ENCODE measurements at regions of chr7 and their contacts with region 1.

Region 1: GRCh38 chr7:41940760-41941343 is 238.0 kb upstream of the INHBA start:
- DNase-seq: peak; percentile 59 to 71
- ATAC-seq: peak; percentile 79 to 90
- H3K4me3 ChIP-seq: no peak overlapping the region
- H3K27ac ChIP-seq: no peak overlapping the region
- H3K4me1 ChIP-seq: 0 out of 3 replicates have a peak, but pooled peaks cover 5% of the 10 kb centered on the region
- CTCF ChIP-seq: peak; percentile 77
- EP300 ChIP-seq: no peak
- POLR2A ChIP-seq: no peak
- RAD21 ChIP-seq: peak; percentile 70 to 74

Region 2: GRCh38 chr7:41930538-41931262 is 10.2 kb before region 1 on chr7:
- CTCF ChIA-PET with region 1: interaction called, 17 read pairs
- POLR2A ChIA-PET with region 1: no interaction called
- DNase-seq: no peak
- ATAC-seq: no peak
- H3K4me3 ChIP-seq: no peak overlapping the region
- H3K27ac ChIP-seq: no peak overlapping the region
- H3K4me1 ChIP-seq: no peaks in the 10 kb centered on the region
- CTCF ChIP-seq: no peak
- EP300 ChIP-seq: no peak
- POLR2A ChIP-seq: no peak
- RAD21 ChIP-seq: no peak

Region 3: GRCh38 chr7:41977151-41977651 is 36.3 kb after region 1 on chr7:
- CTCF ChIA-PET with region 1: interaction called, 88 read pairs
- POLR2A ChIA-PET with region 1: no interaction called
- DNase-seq: peak; percentile 28 to 53
- ATAC-seq: peak; percentile 65 to 80; a peak in 3 of 6 replicates
- H3K4me3 ChIP-seq: no peak overlapping the region
- H3K27ac ChIP-seq: no peak overlapping the region
- H3K4me1 ChIP-seq: no peaks in the 10 kb centered on the region
- CTCF ChIP-seq: peak; percentile 65
- EP300 ChIP-seq: no peak
- POLR2A ChIP-seq: no peak
- RAD21 ChIP-seq: peak; percentile 64; a peak in 4 of 5 replicates

Region 4: GRCh38 chr7:42138691-42139090 is 197.8 kb after region 1 on chr7:
- CTCF ChIA-PET with region 1: no interaction called
- POLR2A ChIA-PET with region 1: no interaction called
- DNase-seq: no peak
- ATAC-seq: no peak; a peak in 1 of 6 replicates
- H3K4me3 ChIP-seq: no peak overlapping the region
- H3K27ac ChIP-seq: no peak overlapping the region
- H3K4me1 ChIP-seq: no peaks in the 10 kb centered on the region
- CTCF ChIP-seq: no peak
- EP300 ChIP-seq: no peak
- POLR2A ChIP-seq: no peak
- RAD21 ChIP-seq: no peak

Region 5: GRCh38 chr7:42238709-42239391 is 298.0 kb after region 1 on chr7:
- CTCF ChIA-PET with region 1: no interaction called
- POLR2A ChIA-PET with region 1: no interaction called
- DNase-seq: no peak
- ATAC-seq: no peak
- H3K4me3 ChIP-seq: no peak overlapping the region
- H3K27ac ChIP-seq: no peak overlapping the region
- H3K4me1 ChIP-seq: no peaks in the 10 kb centered on the region
- CTCF ChIP-seq: no peak
- EP300 ChIP-seq: no peak
- POLR2A ChIP-seq: no peak
- RAD21 ChIP-seq: no peak

Region 6: DNA sequence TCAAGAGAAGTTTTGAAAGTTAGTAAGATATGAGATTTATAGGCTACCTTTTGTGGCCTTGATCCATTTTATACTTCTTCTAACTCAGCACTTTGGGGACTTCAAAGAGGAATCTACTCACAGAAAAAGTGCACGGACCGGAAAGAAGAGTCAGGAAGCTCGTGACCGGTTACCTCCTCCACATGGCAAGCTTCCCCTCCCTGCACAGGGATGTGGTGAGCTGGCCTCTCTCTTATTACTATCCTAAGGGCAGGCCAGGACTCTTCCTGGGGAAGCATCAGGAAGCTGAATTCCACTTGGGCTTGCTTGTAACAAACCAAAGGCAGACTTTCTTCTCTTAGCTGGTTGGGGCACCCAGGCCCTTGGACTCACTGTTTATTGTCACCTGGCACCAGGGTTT is 467.0 kb after region 1 on chr7:
- CTCF ChIA-PET with region 1: no interaction called
- POLR2A ChIA-PET with region 1: no interaction called
- DNase-seq: no peak
- ATAC-seq: no peak
- H3K4me3 ChIP-seq: no peak overlapping the region
- H3K27ac ChIP-seq: no peak overlapping the region
- H3K4me1 ChIP-seq: no peaks in the 10 kb centered on the region
- CTCF ChIP-seq: no peak
- EP300 ChIP-seq: no peak
- POLR2A ChIP-seq: no peak
- RAD21 ChIP-seq: no peak

Region 7: GRCh38 chr7:42527004-42527403 is 586.2 kb after region 1 on chr7:
- CTCF ChIA-PET with region 1: no interaction called
- POLR2A ChIA-PET with region 1: no interaction called
- DNase-seq: no peak
- ATAC-seq: no peak
- H3K4me3 ChIP-seq: no peak overlapping the region
- H3K27ac ChIP-seq: no peak overlapping the region
- H3K4me1 ChIP-seq: no peaks in the 10 kb centered on the region
- CTCF ChIP-seq: no peak
- EP300 ChIP-seq: no peak
- POLR2A ChIP-seq: no peak
- RAD21 ChIP-seq: no peak

Region 8: DNA sequence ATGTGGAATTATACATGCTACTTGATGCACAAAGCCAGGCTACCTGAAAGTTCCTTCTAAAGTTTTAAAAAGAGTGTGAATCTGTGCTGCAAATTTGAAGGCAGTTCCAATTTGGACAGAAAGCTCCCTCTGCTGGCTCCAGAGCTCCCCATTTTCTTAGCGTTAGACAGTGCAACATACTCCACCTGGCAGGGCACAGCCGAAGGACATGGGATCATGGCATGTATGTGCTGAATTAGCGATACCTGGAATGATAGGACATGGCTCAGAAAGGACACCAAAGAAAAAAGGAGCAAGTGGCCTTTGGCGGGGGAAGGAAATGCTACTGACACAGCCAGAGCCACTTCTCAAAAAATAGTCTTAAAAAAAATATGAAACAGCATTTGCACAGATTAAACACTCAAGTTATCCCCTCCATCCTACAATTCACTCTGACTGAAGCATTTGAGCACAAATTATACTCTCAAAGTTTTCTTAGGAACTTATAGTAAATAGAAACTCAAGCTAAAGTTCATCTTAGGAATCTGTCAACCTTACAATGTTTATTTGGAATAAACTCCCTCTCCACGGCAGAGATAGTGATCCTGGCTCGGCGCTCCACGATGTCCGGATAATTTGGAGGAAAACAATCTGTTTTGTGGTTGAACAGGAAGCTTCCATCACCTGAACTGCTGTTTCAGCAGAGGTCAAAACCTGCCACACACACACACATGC is 891.0 kb after region 1 on chr7:
- CTCF ChIA-PET with region 1: interaction called, 11 read pairs
- POLR2A ChIA-PET with region 1: no interaction called
- DNase-seq: peak in 1 of 2 experiments; percentile 30
- ATAC-seq: peak; percentile 84 to 89; a peak in 5 of 6 replicates
- H3K4me3 ChIP-seq: no peak overlapping the region
- H3K27ac ChIP-seq: no peak overlapping the region
- H3K4me1 ChIP-seq: no peaks in the 10 kb centered on the region
- CTCF ChIP-seq: peak; percentile 47
- EP300 ChIP-seq: no peak
- POLR2A ChIP-seq: no peak
- RAD21 ChIP-seq: peak; percentile 53 to 56

Region 9: GRCh38 chr7:42876182-42877068 is 935.6 kb after region 1 on chr7:
- CTCF ChIA-PET with region 1: interaction called, 99 read pairs
- POLR2A ChIA-PET with region 1: no interaction called
- DNase-seq: peak in 1 of 2 experiments; percentile 58
- ATAC-seq: peak; percentile 70 to 93; a peak in 5 of 6 replicates
- H3K4me3 ChIP-seq: no peak overlapping the region
- H3K27ac ChIP-seq: no peak overlapping the region
- H3K4me1 ChIP-seq: no peaks in the 10 kb centered on the region
- CTCF ChIP-seq: peak; percentile 76
- EP300 ChIP-seq: no peak
- POLR2A ChIP-seq: no peak
- RAD21 ChIP-seq: peak; percentile 59 to 68

Measured in A549 (cell line).